ENCODE measurements at regions of chr11 and their contacts with region 1.

Region 1: DNA sequence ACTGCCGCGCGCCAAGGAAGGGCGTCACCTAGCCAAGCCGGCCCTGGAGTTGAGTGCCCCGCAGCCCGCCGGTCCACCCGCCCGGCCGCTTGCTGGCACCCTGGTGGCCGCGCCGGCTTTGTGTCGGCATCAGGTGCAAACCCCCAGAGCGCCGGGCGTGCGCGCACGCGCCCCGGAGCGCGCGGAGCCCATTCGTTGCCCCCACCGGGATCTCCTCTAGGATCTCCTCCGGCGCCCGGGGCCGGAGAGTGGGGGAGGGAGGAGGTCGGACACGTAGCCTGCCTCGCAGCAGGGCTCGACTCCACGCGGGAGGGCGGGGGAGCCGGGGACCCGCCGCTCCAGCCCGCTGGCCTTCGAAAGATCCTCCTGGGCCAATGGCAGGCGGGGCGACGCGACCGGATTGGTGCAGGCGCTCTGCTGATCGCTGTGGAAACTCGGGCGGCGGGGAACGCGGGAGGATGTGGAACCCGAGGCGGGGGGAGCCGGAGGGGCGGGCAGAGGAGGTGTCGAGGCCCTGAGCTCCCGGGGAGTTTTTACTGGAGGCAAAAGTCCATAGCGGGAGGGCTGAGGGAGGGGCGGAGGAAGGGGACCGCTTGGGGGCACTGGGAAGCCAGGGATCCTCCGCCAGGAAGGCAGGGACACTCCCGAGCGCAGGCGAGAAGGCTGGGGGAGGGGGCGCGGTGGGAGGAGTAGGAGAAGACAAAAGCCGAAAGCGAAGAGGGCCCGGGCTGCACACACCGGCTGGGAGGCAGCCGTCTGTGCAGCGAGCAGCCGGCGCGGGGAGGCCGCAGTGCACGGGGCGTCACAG is at the start of gene FADS2:
- DNase-seq: peak; percentile 92
- ATAC-seq: peak; percentile 88
- H3K4me3 Mint-ChIP-seq: peak within 1 kb of the TSS; percentile 94
- H3K27ac Mint-ChIP-seq: peak within 1 kb of the TSS; percentile 89
- H3K4me1 Mint-ChIP-seq: peaks cover 38% of the 10 kb centered on the region
- H3K27me3 Mint-ChIP-seq: peaks cover 14% of the 10 kb centered on the region
- total RNA-seq, gene FADS2: 245 to 280 TPM

Region 2: GRCh38 chr11:61756452-61757212 is 71.1 kb before region 1 on chr11:
- POLR2A ChIA-PET with region 1: no interaction called
- DNase-seq: peak; percentile 51
- ATAC-seq: peak; percentile 79
- H3K4me3 Mint-ChIP-seq: peak overlapping the region; percentile 52
- H3K27ac Mint-ChIP-seq: peak overlapping the region; percentile 82
- H3K4me1 Mint-ChIP-seq: peaks cover 19% of the 10 kb centered on the region
- H3K27me3 Mint-ChIP-seq: peaks cover 21% of the 10 kb centered on the region

Region 3: DNA sequence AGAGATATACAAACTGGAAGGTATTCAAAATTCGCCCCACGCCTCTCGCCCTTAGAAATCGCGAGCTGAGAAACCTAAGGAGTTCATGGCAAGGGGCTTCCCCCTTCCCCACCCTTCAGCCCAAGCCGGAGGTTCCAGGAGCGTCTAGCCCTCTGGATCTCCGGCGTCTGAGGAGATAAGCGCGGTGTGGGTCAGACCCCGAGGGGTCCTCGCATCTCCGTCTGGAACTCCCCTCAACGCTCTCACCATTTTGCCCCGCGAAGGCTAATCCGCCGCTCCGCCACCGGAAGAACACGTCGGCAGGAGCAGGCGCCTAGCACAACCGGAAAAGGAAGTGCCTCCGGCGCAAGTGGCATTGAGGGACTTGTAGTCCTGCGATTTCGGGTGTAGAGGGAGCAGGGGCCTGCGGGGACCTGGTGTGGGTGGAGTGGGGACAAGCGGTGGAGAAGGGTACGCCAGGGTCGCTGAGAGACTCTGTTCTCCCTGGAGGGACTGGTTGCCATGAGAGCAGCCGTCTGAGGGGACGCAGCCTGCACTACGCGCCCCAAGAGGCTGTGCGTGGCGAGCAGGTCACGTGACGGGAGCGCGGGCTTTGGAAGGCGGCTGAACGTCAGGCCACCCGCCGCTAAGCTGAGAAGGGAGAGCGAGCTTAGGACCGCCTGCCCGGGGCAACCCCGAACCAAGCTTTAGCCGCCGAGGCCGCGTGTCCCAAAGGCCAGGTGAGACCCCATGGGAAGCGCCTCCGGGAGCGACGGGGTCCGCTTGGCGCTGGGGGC is 35.3 kb before region 1 on chr11 and contains the starts of genes FEN1 and TMEM258:
- POLR2A ChIA-PET with region 1: interaction called, 21 read pairs
- DNase-seq: peak; percentile 92
- ATAC-seq: peak; percentile 91
- H3K4me3 Mint-ChIP-seq: peak within 1 kb of the TSS; percentile 91
- H3K27ac Mint-ChIP-seq: peak within 1 kb of the TSS; percentile 99
- H3K4me1 Mint-ChIP-seq: peaks cover 49% of the 10 kb centered on the region
- H3K27me3 Mint-ChIP-seq: no peaks in the 10 kb centered on the region
- total RNA-seq, gene FEN1: 87.1 to 88.7 TPM
- total RNA-seq, gene TMEM258: 127 to 140 TPM

Region 4: DNA sequence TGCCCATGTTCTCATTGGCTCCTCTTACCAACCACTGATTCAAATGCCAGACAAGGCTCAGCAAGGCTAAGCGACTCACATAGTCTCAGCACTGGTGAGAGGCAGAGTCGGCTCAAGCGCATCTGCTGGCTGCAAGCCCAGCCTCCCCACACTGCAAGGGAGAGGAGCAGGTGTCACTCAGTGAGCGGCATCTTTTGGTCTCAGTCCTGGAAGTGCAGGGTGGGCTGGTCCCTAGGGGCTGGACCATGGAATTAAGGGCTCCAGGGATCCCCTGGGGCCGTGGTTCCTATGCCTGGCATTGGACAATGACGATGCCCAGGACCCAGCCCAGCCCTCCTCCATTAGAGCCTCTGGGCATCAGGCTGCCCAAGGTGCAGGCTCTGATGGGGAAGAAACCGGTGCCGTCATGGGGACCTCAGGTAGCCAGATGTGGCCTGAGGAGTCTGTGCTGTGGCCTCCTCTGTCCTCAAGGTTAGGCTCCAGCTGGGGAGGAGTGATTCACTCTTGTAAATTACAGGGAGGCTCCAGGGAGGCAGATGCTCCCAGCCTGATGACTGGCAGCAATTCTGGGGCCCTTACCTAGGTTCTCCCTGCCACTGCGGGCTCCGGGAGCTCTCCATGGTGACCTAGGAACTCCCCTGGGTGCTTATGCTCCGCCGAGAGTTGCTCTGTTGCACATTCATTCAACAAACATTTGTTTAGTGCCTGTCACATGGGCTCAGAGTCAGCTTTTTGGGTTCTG is 28.3 kb after region 1 on chr11:
- POLR2A ChIA-PET with region 1: no interaction called
- DNase-seq: no peak
- ATAC-seq: no peak
- H3K4me3 Mint-ChIP-seq: no peak overlapping the region
- H3K27ac Mint-ChIP-seq: no peak overlapping the region
- H3K4me1 Mint-ChIP-seq: peaks cover 1% of the 10 kb centered on the region
- H3K27me3 Mint-ChIP-seq: no peaks in the 10 kb centered on the region

Measured in activated naive CD8-positive, alpha-beta T cell treated with anti-CD3 and anti-CD28 coated beads, Interleukin-2, amount 10 ng/mL, durations not matched to agents 7 days and 5 days (primary cell).